ENCODE measurements at regions of chr13 and their contacts with region 1.

Region 1: DNA sequence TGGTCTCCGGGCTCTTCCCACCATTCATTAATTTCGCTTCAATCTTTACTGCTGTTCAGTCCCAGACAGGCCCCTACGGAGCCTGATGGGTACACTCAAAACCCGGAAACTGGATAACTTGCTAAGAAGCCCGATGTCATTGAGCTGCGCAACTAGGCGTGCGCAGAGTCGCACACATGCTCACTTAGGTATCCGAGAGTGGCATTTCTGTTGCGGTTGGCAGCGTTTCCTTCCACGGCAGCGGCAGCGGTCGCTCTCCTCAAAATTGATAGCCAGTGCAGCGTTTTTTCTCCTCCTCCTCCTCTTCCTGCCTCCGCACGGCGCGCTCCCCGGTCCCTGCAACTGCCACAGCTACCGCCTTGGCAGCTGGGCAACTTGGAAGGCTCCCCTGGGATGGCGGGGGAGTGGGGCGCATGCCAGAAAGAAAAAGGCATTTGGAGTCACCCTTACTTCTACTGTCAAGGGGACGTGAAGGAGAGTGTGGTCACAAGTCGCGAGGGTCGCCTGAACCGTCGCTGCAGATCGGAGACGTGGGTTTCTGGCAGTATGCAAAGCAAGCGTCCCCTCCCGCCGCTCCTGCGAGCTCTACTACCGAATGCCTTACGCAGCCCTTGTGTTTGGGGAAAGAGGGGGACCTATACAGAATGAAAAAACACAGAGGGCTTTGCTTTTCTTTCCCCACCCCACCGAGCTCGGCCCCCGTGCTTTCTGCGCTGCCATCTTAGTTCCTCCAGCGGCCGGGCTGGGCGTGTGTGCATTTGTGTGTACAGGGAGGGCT is 2.4 kb upstream of the MYCBP2 start:
- DNase-seq: peak; percentile 75 to 86
- ATAC-seq: peak; percentile 74 to 88 (median 86)
- H3K4me3 ChIP-seq: peak overlapping the region; percentile 68 to 97 (median 82)
- H3K27ac ChIP-seq: peak overlapping the region; percentile 70 to 94 (median 87)
- H3K4me1 ChIP-seq: peaks cover 0 to 40% (median 29%) of the 10 kb centered on the region in 9 donors
- H3K27me3 ChIP-seq: no peaks in the 10 kb centered on the region
- CTCF ChIP-seq: peak in 2 of 9 donors; percentile 8 to 12

Region 2: GRCh38 chr13:77285098-77285497 is 44.2 kb before region 1 on chr13:
- intact Hi-C with region 1: loop called in 2 of 10 experiments (anchors 5 kb)
- DNase-seq: no peak
- ATAC-seq: no peak
- H3K4me3 ChIP-seq: no peak overlapping the region
- H3K27ac ChIP-seq: no peak overlapping the region
- H3K4me1 ChIP-seq: peaks cover 0 to 5% (median 0%) of the 10 kb centered on the region in 9 donors
- H3K27me3 ChIP-seq: no peaks in the 10 kb centered on the region
- CTCF ChIP-seq: no peak

Region 3: DNA sequence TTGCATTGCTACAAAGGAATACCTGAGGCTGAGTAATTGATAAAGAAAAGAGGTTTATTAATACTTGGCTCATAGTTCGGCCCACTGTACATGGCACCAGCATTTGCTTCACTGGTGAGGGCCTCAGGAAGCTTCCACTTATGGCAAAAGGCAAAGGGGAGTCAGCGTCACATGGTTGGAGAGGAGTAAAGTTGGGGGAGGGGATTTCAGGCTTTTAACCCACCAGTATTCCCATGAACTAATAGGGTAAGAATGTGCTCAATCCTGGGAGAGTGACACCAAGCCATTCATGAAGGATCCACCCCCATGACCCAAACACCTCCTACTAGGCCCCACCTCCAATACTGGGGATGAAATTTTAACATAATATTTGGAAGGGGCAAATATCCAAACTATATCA is 80.1 kb after region 1 on chr13:
- intact Hi-C with region 1: no loop called
- DNase-seq: no peak
- ATAC-seq: no peak
- H3K4me3 ChIP-seq: no peak overlapping the region
- H3K27ac ChIP-seq: no peak overlapping the region
- H3K4me1 ChIP-seq: no peaks in the 10 kb centered on the region
- H3K27me3 ChIP-seq: peaks cover 0 to 4% (median 0%) of the 10 kb centered on the region in 7 donors
- CTCF ChIP-seq: no peak

Region 4: DNA sequence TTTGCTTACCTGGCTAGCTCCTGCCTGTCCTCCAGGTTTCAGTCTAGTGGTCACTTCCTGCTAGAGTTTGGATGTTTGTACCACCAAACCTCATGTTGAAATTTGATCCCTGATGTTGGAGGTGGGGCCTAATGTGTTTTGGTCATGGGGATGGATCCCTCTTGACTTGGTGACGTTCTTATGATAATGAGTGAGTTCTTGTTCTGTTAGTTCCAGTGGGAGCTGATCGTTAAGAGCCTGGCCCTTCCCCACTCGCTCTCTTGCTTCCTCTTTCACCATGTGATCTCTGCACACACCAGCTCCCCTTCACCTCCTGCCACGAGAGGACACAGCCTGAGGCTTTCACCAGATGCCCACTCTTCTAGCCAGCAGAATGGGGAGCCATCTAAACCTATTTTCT is 119.4 kb after region 1 on chr13:
- intact Hi-C with region 1: no loop called
- DNase-seq: no peak
- ATAC-seq: no peak
- H3K4me3 ChIP-seq: no peak overlapping the region
- H3K27ac ChIP-seq: no peak overlapping the region
- H3K4me1 ChIP-seq: no peaks in the 10 kb centered on the region
- H3K27me3 ChIP-seq: peaks cover 0 to 9% (median 0%) of the 10 kb centered on the region in 7 donors
- CTCF ChIP-seq: no peak

Measured in heart right ventricle (tissue), 16 donors.